ENCODE measurements at regions of chr6 and their contacts with region 1.

Region 1: DNA sequence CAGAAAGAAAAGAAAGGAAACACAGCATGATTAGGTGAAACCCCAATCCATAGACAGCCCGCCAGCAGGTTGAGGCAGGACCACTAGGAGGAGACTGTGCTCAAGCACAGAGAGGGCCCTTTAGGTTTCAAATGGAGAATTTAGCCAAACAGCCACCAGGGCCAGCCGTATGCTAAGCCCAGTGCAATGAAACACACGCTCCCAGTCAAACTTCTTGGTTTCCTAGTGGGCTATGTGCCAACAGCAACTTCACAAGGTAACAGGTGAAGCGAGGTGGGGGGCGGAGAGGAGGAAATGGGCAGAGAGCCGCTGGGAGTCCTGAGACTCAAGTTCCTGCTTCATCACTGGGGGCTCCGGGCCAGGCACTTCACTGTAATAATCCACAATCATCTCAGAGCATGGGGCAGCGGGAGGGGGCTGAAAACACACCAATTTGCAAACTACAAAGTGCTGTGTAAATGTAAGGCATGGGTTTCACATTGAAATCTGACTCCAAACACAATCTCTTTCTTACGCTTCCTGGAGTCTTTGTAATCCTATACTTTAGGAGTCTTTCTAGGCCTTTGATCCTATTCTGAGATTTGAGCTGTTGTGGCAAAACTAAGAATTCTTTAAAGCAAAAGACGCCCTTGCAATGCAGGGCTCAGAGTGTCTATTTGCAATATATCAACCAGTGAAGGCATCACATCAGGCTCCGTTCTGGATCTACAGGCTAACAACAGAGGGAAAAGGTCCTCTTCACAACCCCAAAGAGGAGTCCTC is 117.3 kb downstream of the OPRM1 start:
- DNase-seq: peak in 3 of 5 donors; percentile 18 to 34 (median 25)
- ATAC-seq: peak; percentile 55 to 78 (median 68)
- H3K4me3 ChIP-seq: no peak overlapping the region
- H3K27ac ChIP-seq: peak overlapping the region in 1 of 12 donors; percentile 74
- H3K4me1 ChIP-seq: peaks cover 0 to 50% (median 0%) of the 10 kb centered on the region in 12 donors
- H3K27me3 ChIP-seq: no peaks in the 10 kb centered on the region
- CTCF ChIP-seq: peak; percentile 15 to 56 (median 42)
- POLR2A ChIP-seq: no peak

Region 2: DNA sequence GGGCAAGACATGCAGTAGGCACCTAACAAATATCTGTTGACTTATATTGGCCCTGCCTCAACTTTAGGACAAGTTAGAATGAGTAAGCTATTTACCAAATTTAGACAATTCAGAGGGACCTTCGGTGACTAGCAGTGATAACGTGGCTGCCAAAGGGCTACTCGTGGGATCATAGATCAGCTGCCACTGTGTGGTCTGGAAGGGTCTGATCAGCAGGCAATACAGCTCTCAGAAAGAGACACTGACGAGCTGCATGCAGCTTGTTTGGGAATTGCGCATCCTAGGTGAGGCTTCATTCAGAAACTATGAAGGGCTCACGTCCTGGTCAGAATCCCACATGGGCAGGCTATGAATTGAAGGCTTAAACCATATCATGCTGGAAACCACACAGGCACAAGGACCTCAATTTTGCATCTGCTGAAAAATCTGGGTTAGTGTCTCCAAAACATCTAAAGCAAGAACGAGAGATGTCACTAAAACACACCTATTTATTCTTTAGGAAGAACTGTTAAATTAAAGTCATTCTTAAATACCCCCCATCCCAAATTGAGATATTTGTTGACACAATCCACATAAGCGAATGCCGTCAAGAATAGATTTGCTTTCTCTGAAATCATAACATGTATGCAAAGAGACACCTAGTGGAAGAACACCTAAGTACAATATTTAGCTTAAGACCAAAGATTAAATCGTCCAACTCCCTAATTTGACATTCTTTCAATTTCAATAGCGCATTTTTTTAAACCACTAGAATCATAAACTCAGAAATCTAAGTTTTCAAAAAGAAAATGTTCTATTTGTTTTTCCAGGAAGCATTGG is 120.7 kb after region 1 on chr6:
- intact Hi-C with region 1: loop called (anchors 1 to 5 kb)
- DNase-seq: no peak
- ATAC-seq: peak in 1 of 4 donors; percentile 53
- H3K4me3 ChIP-seq: peak overlapping the region in 1 of 12 donors; percentile 19
- H3K27ac ChIP-seq: no peak overlapping the region
- H3K4me1 ChIP-seq: peaks cover 0 to 19% (median 0%) of the 10 kb centered on the region in 12 donors
- H3K27me3 ChIP-seq: no peaks in the 10 kb centered on the region
- CTCF ChIP-seq: peak; percentile 44 to 71 (median 58)
- POLR2A ChIP-seq: no peak

Region 3: DNA sequence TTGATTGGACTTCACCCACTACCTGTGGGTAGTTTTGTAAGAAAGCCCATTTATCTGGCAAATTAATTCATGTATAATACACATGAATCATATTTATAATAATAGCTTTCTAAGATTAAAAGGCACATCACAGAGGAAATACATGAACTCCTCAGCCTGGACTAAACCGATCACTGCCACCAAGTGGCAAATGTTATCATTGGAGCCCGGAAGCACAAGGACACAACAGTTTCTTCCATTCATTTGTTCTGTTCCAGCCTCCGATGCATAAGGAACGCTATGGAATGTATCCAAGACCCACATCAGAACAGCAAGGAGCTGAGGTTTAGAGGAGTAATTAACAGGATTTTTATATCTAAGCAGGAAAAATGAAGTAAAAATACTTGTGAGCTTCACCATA is 214.2 kb after region 1 on chr6:
- intact Hi-C with region 1: loop called in 8 of 10 experiments (anchors 1 to 10 kb)
- DNase-seq: no peak
- ATAC-seq: peak; percentile 47 to 70 (median 54)
- H3K4me3 ChIP-seq: no peak overlapping the region
- H3K27ac ChIP-seq: no peak overlapping the region
- H3K4me1 ChIP-seq: peaks cover 0 to 7% (median 0%) of the 10 kb centered on the region in 12 donors
- H3K27me3 ChIP-seq: no peaks in the 10 kb centered on the region
- CTCF ChIP-seq: peak in 11 of 12 donors; percentile 17 to 56 (median 41)
- POLR2A ChIP-seq: no peak

Region 4: GRCh38 chr6:154448448-154449096 is 292.3 kb after region 1 on chr6:
- intact Hi-C with region 1: loop called in 1 of 10 experiments (anchors 5 kb)
- DNase-seq: peak in 2 of 5 donors; percentile 46 to 51
- ATAC-seq: peak; percentile 64 to 94 (median 88)
- H3K4me3 ChIP-seq: peak overlapping the region in 7 of 12 donors; percentile 4 to 31 (median 14)
- H3K27ac ChIP-seq: peak overlapping the region in 11 of 12 donors; percentile 30 to 74 (median 57)
- H3K4me1 ChIP-seq: peaks cover 5 to 45% (median 22%) of the 10 kb centered on the region in 12 donors
- H3K27me3 ChIP-seq: no peaks in the 10 kb centered on the region
- CTCF ChIP-seq: peak in 5 of 12 donors; percentile 8 to 45 (median 27)
- POLR2A ChIP-seq: no peak

Region 5: GRCh38 chr6:154675602-154676088 is 519.3 kb after region 1 on chr6:
- intact Hi-C with region 1: loop called in 3 of 10 experiments (anchors 10 kb)
- DNase-seq: peak; percentile 74 to 87 (median 83)
- ATAC-seq: peak; percentile 94 to 99 (median 98)
- H3K4me3 ChIP-seq: no peak overlapping the region
- H3K27ac ChIP-seq: no peak overlapping the region
- H3K4me1 ChIP-seq: no peaks in the 10 kb centered on the region
- H3K27me3 ChIP-seq: no peaks in the 10 kb centered on the region
- CTCF ChIP-seq: peak; percentile 95 to 100 (median 100)
- POLR2A ChIP-seq: no peak